ENCODE measurements at regions of chr1 and their contacts with region 1.

Region 1: GRCh38 chr1:21255278-21255942 is 34.9 kb downstream of the ECE1 start:
- DNase-seq: peak; percentile 50
- H3K4me3 ChIP-seq: no peak overlapping the region
- H3K27ac ChIP-seq: no peak overlapping the region
- H3K27me3 ChIP-seq: no peaks in the 10 kb centered on the region
- CTCF ChIP-seq: peak; percentile 93

Region 2: GRCh38 chr1:21022279-21023040 is 232.9 kb before region 1 on chr1:
- CTCF ChIA-PET with region 1: no interaction called
- POLR2A ChIA-PET with region 1: no interaction called
- DNase-seq: peak; percentile 94
- H3K4me3 ChIP-seq: no peak overlapping the region
- H3K27ac ChIP-seq: no peak overlapping the region
- H3K27me3 ChIP-seq: no peaks in the 10 kb centered on the region
- CTCF ChIP-seq: no peak

Region 3: DNA sequence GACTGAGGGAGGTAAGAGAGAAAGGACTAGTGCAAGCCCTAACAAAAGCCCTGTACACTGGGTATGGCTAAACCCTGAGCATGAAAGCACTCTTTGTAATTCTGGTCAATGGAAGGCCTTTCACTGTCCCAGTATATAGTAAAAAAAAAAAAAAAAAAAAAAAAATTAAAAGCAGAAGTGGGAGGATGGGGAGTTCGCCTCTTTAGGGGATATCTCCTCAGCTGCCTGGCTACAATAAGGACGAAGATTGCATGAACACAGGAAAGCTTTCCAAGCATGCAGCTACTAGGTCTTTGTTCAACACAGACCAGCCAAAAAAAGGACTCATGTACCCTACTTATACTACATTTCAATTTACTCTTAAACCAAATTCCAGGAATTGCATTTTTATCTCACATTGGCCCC is 137.8 kb before region 1 on chr1:
- CTCF ChIA-PET with region 1: no interaction called
- POLR2A ChIA-PET with region 1: no interaction called
- DNase-seq: no peak
- H3K4me3 ChIP-seq: no peak overlapping the region
- H3K27ac ChIP-seq: no peak overlapping the region
- H3K27me3 ChIP-seq: no peaks in the 10 kb centered on the region
- CTCF ChIP-seq: no peak

Region 4: DNA sequence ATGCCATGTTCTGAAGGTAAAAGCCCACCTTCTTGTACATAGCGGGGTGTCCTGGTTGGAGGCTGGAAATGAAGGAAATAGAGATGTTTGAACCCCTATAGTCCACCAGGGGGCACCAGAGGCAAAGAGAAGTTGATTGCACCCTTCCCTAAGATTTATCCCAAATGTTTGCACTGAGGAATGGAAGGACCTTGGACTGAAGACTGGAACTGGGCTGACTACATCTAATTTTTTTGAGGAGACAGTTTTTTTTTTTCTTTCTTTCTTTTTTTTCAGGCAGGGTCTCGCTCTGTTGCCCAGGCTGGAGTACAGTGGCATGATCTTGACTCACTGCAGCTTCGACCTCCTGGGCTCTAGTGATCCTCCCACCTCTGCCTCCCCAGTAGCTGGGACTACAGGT is 23.4 kb before region 1 on chr1:
- CTCF ChIA-PET with region 1: interaction called, 30 read pairs
- POLR2A ChIA-PET with region 1: no interaction called
- DNase-seq: no peak
- H3K4me3 ChIP-seq: no peak overlapping the region
- H3K27ac ChIP-seq: no peak overlapping the region
- H3K27me3 ChIP-seq: no peaks in the 10 kb centered on the region
- CTCF ChIP-seq: peak; percentile 77

Region 5: DNA sequence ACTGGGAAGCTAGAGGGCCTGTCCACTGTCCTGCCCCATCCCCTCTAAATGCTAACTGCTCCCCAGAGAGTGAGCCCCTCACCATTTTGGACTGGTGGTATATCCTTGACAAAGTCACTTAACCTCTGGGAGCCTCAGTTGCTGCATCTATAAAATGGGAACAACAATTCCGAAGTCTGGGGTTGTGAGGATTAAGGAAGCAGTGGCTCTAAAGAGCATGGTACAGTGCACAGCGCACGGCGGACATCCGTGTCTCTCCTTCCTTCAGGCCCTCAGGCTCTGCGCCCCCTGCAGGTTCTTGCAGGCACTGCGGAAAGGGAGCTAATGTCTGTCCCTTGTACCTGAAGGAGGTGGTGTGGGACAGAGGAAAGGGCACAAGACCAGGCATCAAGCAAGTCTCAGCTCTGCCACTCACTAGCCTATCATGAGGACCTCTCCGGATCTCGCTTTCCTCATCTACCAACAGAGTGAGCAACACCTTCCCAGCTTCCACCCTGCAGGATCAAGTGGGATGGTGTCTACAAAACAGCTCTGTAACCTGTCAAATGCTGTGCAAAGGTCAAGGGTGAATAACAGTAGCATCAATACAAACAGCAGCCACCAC is 14.8 kb after region 1 on chr1:
- CTCF ChIA-PET with region 1: interaction called, 39 read pairs
- POLR2A ChIA-PET with region 1: interaction called, 5 read pairs
- DNase-seq: no peak
- H3K4me3 ChIP-seq: no peak overlapping the region
- H3K27ac ChIP-seq: no peak overlapping the region
- H3K27me3 ChIP-seq: no peaks in the 10 kb centered on the region
- CTCF ChIP-seq: peak; percentile 89

Region 6: GRCh38 chr1:21324368-21325141 is 69.1 kb after region 1 on chr1:
- CTCF ChIA-PET with region 1: interaction called, 11 read pairs
- POLR2A ChIA-PET with region 1: no interaction called
- DNase-seq: no peak
- H3K4me3 ChIP-seq: peak overlapping the region; percentile 13; the same call in 1 of the 2 replicates
- H3K27ac ChIP-seq: peak overlapping the region; percentile 95
- H3K27me3 ChIP-seq: no peaks in the 10 kb centered on the region
- CTCF ChIP-seq: no peak

Region 7: DNA sequence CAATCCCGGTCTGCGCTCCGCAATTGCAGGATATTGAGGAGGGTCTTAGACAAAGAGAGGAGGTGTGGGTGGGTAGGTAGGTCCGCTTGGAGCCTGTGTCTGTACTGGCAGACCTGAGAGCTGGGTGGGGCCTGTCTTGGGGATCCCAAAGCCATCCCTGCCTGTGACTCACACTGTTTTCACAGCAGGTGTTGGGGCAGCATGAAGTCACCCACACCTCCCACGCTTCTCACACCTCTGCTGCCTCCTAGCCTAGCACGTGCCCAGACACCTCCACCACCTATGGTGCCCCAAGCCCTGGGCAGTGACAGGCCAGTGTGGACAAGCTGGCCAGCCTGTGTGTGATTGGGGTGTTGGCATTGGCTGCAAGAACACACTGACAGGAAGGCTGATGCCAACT is 100.5 kb after region 1 on chr1:
- CTCF ChIA-PET with region 1: interaction called, 11 read pairs
- POLR2A ChIA-PET with region 1: no interaction called
- DNase-seq: no peak
- H3K4me3 ChIP-seq: no peak overlapping the region
- H3K27ac ChIP-seq: no peak overlapping the region
- H3K27me3 ChIP-seq: peaks cover 3% of the 10 kb centered on the region
- CTCF ChIP-seq: no peak

Measured in AG04450 (cell line).